ENCODE measurements at regions of chr12 and their contacts with region 1.

Region 1: DNA sequence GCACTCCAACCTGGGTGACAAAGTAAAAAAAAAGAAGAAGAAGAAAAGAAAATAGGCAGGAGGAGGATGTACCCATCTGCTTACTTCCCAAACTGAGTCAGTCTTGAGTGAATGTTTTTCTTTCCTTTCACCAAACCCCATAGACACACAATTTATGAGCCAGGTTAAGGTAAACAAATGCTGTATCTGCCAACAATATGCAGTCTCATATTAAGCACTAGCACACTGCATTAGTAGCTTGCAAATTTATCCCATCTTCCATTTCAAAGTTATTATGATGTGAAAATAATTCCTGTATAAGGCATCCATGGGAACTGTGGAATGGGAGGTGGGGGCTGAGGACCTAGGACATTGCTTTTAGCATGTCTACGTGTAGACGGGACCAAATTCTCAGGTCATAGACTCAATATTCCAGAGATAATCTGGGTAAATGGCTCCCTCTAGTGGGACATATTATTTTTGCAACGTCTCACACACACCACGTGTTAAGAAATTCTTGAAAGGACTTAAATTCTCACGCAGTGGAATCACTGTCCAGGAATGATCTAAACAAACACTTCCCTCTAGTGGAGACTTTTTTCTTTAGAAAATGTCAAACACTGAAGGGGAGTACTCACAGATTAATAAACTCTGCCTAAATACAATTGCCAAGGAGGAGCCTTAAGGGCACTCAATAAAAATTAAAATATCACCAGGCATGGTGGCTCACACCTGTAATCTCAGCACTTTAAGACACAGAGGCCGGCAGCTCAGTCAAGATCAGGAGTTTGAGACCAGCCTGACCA is 17.1 kb upstream of the OR10P1 start:
- DNase-seq: no peak
- H3K4me3 ChIP-seq: no peak overlapping the region
- H3K27ac ChIP-seq: no peak overlapping the region
- H3K4me1 ChIP-seq: peaks cover 0 to 6% (median 3%) of the 10 kb centered on the region in 4 donors
- H3K27me3 ChIP-seq: no peaks in the 10 kb centered on the region
- CTCF ChIP-seq: peak; percentile 76 to 89

Region 2: DNA sequence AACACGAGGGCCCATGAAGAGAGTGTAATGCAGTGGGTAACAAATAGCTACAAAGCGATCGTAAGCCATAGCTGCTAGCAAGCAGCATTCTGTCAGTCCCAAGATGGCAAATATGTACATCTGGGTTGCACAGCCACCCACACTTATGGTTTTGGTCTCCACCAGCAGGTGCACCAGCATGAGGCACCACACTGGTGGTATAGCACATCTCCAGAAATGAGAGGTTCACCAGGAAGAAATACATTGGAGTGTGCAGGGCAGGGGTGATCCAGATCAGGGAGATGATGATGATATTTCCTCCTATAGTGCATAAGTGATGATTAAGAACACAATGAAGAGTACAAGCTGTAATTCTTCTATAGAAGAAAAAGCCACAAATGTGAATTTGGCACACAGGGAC is 425.2 kb before region 1 on chr12:
- intact Hi-C with region 1: loop called (anchors 5 kb)
- DNase-seq: no peak
- H3K4me3 ChIP-seq: no peak overlapping the region
- H3K27ac ChIP-seq: no peak overlapping the region
- H3K4me1 ChIP-seq: no peaks in the 10 kb centered on the region
- H3K27me3 ChIP-seq: no peaks in the 10 kb centered on the region
- CTCF ChIP-seq: no peak